T-cell (primary cell): ENCODE measurements at regions of chr5 and their contacts with region 1.

Region 1: GRCh38 chr5:147674411-147674810 is 108.1 kb downstream of the JAKMIP2 start:
- DNase-seq: no peak
- ATAC-seq: no peak
- H3K4me3 ChIP-seq: no peak overlapping the region
- H3K4me3 Mint-ChIP-seq: no peak overlapping the region
- H3K27ac ChIP-seq: no peak overlapping the region
- H3K27ac Mint-ChIP-seq: no peak overlapping the region
- H3K4me1 ChIP-seq: no peaks in the 10 kb centered on the region
- H3K4me1 Mint-ChIP-seq: no peaks in the 10 kb centered on the region
- H3K27me3 ChIP-seq: no peaks in the 10 kb centered on the region
- H3K27me3 Mint-ChIP-seq: no peaks in the 10 kb centered on the region

Region 2: DNA sequence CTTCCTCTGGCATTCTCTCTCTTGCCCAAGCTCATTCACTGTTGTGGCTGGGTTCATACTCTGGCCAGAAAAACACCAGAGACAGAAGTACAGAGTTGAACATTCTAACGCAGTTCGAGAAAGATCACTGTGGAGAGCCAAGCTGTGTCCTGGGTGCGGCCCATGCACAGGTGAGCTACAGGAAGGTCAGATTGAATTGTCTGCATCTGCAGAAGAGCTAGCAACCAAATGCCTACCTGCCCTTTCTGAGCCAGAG is 37.8 kb before region 1 on chr5:
- CTCF ChIA-PET with region 1: interaction called in 1 of 2 experiments, 10 read pairs
- POLR2A ChIA-PET with region 1: no interaction called
- DNase-seq: no peak
- ATAC-seq: no peak
- H3K4me3 ChIP-seq: no peak overlapping the region
- H3K4me3 Mint-ChIP-seq: no peak overlapping the region
- H3K27ac ChIP-seq: no peak overlapping the region
- H3K27ac Mint-ChIP-seq: no peak overlapping the region
- H3K4me1 ChIP-seq: no peaks in the 10 kb centered on the region
- H3K4me1 Mint-ChIP-seq: no peaks in the 10 kb centered on the region
- H3K27me3 ChIP-seq: no peaks in the 10 kb centered on the region
- H3K27me3 Mint-ChIP-seq: no peaks in the 10 kb centered on the region

Region 3: DNA sequence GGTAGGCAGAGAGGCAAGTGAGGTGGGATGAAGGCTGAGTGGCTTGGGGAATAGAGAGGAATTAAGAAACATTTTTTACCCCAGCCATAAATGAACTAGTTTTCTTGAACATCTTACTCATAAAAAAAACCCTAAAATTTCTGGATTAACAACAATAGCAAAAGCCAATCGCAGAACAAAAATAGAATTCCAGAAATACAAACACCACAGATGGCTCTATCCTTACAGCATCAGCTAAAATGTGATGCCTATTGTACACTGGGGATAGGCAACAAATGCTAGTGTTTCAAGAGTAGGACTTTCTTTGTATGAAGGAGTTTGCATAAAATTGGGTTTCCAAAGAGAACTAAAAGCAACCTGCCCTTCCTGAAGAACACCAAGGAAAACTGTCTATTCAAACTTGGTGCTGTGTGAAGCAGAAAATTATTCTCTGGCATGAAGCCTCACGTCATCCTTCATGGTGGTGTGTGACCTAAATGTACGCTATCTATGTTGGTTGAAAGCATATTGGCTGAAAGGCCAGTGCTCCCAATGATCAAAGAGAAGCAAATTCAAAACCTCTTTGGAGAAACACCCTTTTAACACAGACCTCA is 25.2 kb after region 1 on chr5:
- CTCF ChIA-PET with region 1: no interaction called
- POLR2A ChIA-PET with region 1: no interaction called
- DNase-seq: no peak
- ATAC-seq: no peak
- H3K4me3 ChIP-seq: no peak overlapping the region
- H3K4me3 Mint-ChIP-seq: no peak overlapping the region
- H3K27ac ChIP-seq: no peak overlapping the region
- H3K27ac Mint-ChIP-seq: no peak overlapping the region
- H3K4me1 ChIP-seq: no peaks in the 10 kb centered on the region
- H3K4me1 Mint-ChIP-seq: no peaks in the 10 kb centered on the region
- H3K27me3 ChIP-seq: no peaks in the 10 kb centered on the region
- H3K27me3 Mint-ChIP-seq: peaks cover 0 to 3% of the 10 kb centered on the region in 2 donors

Region 4: DNA sequence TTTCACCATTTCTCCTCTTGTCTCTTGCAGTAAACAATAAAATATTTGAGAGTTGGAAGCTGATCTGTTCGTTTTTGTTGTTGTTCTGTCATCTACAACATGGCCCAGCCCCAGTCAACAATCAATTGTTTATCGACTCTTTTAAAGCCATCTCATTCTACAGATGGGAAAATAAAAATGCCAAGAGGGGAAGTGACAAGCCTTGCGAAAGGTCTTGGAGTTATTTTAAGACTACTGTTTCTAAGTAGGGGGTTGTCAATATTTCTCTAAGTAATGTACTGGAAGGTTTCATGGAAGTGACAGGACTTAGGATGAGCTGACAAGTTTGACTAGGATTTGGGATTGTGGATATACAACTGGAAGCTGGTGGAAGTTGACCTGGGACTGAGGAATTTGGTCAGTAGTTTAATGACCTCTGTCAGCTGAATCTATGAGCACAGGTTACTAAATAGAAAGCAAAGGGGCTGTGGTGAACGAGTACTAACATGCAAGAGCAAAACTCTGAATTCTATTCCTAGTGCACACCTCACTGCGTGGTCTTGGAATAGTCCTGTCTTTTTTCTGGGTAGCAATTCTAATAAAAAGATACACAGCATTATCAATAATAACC is 1094.5 kb after region 1 on chr5:
- CTCF ChIA-PET with region 1: no interaction called
- POLR2A ChIA-PET with region 1: no interaction called
- DNase-seq: no peak
- ATAC-seq: no peak
- H3K4me3 ChIP-seq: no peak overlapping the region
- H3K4me3 Mint-ChIP-seq: no peak overlapping the region
- H3K27ac ChIP-seq: no peak overlapping the region
- H3K27ac Mint-ChIP-seq: no peak overlapping the region
- H3K4me1 ChIP-seq: no peaks in the 10 kb centered on the region
- H3K4me1 Mint-ChIP-seq: no peaks in the 10 kb centered on the region
- H3K27me3 ChIP-seq: peaks cover 0 to 7% of the 10 kb centered on the region in 2 experiments
- H3K27me3 Mint-ChIP-seq: peaks cover 37 to 41% of the 10 kb centered on the region in 2 donors